HCT116 (cell line): ENCODE measurements at regions of chr17 and their contacts with region 1.

Region 1: DNA sequence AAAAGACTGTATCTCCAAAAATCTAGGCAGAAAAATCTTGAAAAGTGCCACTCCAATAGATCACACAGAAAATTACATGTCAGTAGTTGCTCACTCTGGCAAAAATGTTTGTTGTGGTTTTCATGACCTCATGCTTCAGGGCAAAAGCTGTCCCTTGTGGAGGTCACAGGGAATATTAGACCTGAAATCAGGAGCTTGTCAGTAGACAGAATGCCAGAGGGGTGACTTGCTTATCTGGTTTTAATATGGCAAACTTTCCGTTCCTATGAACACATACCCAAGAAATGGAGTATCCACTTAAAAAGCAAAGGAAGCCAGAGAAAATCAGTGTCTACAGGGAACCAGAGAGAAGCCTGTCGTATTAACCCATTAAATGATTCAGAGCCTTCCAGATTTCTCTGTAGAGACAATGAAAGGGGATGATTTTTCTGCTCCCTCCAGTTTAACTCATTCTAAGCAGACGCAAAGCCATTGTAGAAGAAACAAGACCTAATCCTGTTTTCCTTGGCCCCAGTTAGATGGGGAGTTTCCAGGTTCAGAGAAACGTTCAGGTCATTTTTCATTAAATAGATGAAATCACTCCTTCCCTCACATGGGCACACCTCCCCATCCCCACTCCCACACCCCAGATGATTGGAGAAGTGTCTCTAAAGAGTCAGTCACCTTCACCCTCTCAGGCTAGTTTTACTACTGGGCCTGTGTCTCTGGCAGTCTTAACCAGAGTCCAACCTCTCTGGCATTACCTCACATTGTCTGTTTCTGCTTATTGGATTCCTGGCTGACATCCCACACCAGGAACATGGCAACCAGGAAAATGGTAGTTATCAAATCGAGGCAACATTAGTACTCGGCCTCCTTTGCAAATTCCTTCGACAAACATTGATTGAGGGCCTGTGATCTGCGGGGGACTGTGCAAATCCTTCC is 6.0 kb downstream of the SOX9 start:
- DNase-seq: peak; percentile 91
- ATAC-seq: peak; percentile 77
- H3K4me3 ChIP-seq: no peak overlapping the region
- H3K27ac ChIP-seq: peak overlapping the region; percentile 31; the same call in 1 of the 2 replicates
- H3K4me1 ChIP-seq: peaks cover 36 to 55% of the 10 kb centered on the region in 2 experiments
- H3K27me3 ChIP-seq: no peaks in the 10 kb centered on the region
- CTCF ChIP-seq: peak in 1 of 3 experiments; percentile 24; a peak in 1 of 6 replicates
- POLR2A ChIP-seq: no peak
- RAD21 ChIP-seq: peak; percentile 43

Region 2: DNA sequence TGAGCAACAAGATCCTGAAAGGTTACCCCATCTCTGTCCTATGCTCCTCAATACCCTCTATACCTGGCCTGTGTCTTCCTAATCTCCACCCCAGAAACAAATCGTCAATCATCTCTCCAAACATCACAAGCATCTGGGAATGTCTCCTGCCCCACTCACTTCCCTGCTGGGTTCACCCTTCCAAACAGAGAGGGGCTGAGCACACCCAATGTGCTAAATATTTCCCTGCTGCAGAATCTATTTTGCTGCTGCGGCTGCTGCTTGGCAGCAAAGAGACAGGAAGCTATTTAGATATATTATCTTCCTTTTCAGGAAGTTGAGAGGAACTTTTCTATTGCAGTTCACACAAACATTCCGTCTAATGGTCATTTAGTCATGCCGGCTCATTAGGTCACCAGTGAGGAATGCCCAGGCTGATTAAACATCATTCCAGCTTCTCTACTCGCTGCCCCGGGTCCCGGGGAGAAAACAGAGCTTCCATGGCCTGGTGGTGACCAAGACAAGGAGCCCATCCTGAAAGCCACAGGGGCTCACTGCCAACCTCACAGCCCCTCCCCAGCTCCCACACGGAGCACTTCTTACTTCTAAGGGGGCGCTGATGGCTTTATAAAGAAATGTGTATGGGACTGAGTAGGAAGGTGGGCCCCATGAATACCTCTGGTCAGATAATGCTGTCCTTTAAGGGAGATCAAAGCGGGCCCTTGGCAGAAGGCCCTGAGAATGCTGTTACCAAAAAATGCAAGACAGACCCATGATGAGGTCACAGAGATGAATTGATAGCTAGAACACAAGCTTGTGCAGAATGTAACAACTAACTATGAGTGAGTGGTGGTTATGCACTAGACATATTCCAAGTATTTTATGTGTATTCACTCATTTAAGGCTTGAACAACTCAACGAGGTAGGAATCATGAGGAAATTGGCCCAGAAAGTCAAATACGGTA is 212.3 kb after region 1 on chr17:
- CTCF ChIA-PET with region 1: no interaction called
- POLR2A ChIA-PET with region 1: interaction called, 4 read pairs
- RAD21 ChIA-PET with region 1: interaction called in 1 of 2 experiments, 3 read pairs
- intact Hi-C with region 1: loop called (anchors 5 kb)
- DNase-seq: peak; percentile 91
- ATAC-seq: peak; percentile 86
- H3K4me3 ChIP-seq: peak overlapping the region; percentile 1 to 42; a peak in 3 of 4 replicates
- H3K27ac ChIP-seq: peak overlapping the region; percentile 89
- H3K4me1 ChIP-seq: peaks cover 34 to 49% of the 10 kb centered on the region in 2 experiments
- H3K27me3 ChIP-seq: no peaks in the 10 kb centered on the region
- CTCF ChIP-seq: no peak
- POLR2A ChIP-seq: no peak
- RAD21 ChIP-seq: peak; percentile 36

Region 3: GRCh38 chr17:72388765-72389473 is 262.1 kb after region 1 on chr17:
- CTCF ChIA-PET with region 1: no interaction called
- POLR2A ChIA-PET with region 1: interaction called, 14 read pairs
- RAD21 ChIA-PET with region 1: interaction called in 1 of 2 experiments, 6 read pairs
- intact Hi-C with region 1: loop called (anchors 5 kb)
- DNase-seq: peak; percentile 83
- ATAC-seq: peak; percentile 74
- H3K4me3 ChIP-seq: peak overlapping the region in 1 of 2 experiments; percentile 19; a peak in 1 of 4 replicates
- H3K27ac ChIP-seq: peak overlapping the region; percentile 76
- H3K4me1 ChIP-seq: peaks cover 87 to 95% of the 10 kb centered on the region in 2 experiments
- H3K27me3 ChIP-seq: no peaks in the 10 kb centered on the region
- CTCF ChIP-seq: peak in 2 of 3 experiments; percentile 77 to 86; a peak in 5 of 6 replicates
- POLR2A ChIP-seq: no peak
- RAD21 ChIP-seq: peak; percentile 76

Region 4: GRCh38 chr17:72829883-72830282 is 703.1 kb after region 1 on chr17:
- CTCF ChIA-PET with region 1: no interaction called
- POLR2A ChIA-PET with region 1: no interaction called
- RAD21 ChIA-PET with region 1: no interaction called
- intact Hi-C with region 1: no loop called
- DNase-seq: no peak
- ATAC-seq: no peak
- H3K4me3 ChIP-seq: no peak overlapping the region
- H3K27ac ChIP-seq: no peak overlapping the region
- H3K4me1 ChIP-seq: peaks cover 3 to 13% of the 10 kb centered on the region in 2 experiments; a peak in 3 of 4 replicates
- H3K27me3 ChIP-seq: no peaks in the 10 kb centered on the region
- CTCF ChIP-seq: no peak; a peak in 1 of 6 replicates
- POLR2A ChIP-seq: no peak
- RAD21 ChIP-seq: no peak

Region 5: DNA sequence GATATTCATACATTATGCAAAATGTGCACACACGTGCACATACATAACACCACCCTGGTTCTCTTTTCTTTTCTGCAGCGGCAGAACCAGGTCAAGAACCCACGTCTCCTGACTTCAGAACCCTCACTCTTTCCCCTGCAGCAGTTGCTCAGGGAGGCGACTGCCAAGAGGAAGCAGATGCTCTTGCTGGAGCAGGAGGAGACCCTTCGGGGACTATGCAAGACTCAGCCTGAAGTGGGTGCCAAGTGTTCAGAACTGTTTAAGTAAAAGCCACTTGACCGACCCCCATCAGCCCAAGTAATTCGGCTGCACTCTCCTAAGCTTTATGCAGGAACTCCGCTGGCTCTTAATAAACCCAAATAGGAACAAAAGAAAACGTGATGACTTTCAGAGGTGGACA is 771.9 kb after region 1 on chr17:
- CTCF ChIA-PET with region 1: no interaction called
- POLR2A ChIA-PET with region 1: no interaction called
- RAD21 ChIA-PET with region 1: no interaction called
- intact Hi-C with region 1: loop called (anchors 5 kb)
- DNase-seq: no peak
- ATAC-seq: no peak
- H3K4me3 ChIP-seq: no peak overlapping the region
- H3K27ac ChIP-seq: no peak overlapping the region
- H3K4me1 ChIP-seq: peaks cover 36 to 47% of the 10 kb centered on the region in 2 experiments
- H3K27me3 ChIP-seq: no peaks in the 10 kb centered on the region
- CTCF ChIP-seq: no peak
- POLR2A ChIP-seq: no peak
- RAD21 ChIP-seq: no peak